ENCODE measurements at regions of chrX and their contacts with region 1.

Region 1: DNA sequence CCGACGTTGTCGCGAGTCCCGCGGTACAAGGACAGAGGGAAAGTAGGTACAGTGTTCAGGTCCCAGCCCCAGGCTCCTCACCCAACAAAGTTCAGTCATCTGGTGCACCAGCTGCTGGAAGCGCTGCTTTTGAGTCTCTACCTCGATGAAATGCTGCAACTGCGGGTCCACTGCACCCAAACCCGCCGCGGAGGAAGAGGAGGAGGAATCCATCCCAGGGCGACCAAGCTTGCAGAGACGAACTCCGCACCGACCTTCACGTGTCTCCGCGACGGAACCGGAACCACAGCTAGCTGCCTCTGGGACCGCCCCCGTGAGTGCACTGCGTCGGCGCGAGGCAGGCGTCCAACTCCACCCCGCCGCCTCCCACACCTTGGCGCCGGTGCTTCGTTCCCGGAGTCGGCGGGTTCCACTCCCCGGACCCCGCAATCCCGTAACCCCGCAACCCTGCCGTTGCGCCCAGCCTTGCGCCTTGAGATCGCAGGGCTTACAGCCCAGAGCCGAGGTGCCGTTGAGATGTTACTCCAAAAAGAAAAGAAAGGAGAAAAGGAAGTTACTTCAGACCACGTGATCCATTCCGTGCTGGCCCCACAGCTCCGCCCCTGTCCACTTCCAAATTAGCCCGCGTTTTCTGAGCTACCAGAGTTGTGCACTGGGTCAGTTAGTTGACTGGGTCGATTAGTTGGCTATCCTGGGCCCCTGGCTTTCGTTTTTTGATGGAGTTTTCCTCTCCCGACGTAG is at the start of gene TIMM8A:
- DNase-seq: peak; percentile 21 to 85
- H3K4me3 ChIP-seq: peak within 1 kb of the TSS; percentile 72 to 78
- H3K27ac ChIP-seq: peak within 1 kb of the TSS; percentile 79 to 81
- H3K4me1 ChIP-seq: peaks cover 0 to 2% of the 10 kb centered on the region in 2 donors
- H3K27me3 ChIP-seq: no peaks in the 10 kb centered on the region
- CTCF ChIP-seq: no peak
- total RNA-seq, gene TIMM8A: not detected

Region 2: GRCh38 chrX:101097546-101098453 is 250.8 kb before region 1 on chrX and contains the start of gene CENPI:
- intact Hi-C with region 1: loop called (anchors 5 kb)
- DNase-seq: peak; percentile 83 to 95
- H3K4me3 ChIP-seq: peak within 1 kb of the TSS; percentile 46 to 55
- H3K27ac ChIP-seq: peak within 1 kb of the TSS; percentile 68 to 77
- H3K4me1 ChIP-seq: no peaks in the 10 kb centered on the region
- H3K27me3 ChIP-seq: no peaks in the 10 kb centered on the region
- CTCF ChIP-seq: no peak
- total RNA-seq, gene CENPI: not detected

Region 3: DNA sequence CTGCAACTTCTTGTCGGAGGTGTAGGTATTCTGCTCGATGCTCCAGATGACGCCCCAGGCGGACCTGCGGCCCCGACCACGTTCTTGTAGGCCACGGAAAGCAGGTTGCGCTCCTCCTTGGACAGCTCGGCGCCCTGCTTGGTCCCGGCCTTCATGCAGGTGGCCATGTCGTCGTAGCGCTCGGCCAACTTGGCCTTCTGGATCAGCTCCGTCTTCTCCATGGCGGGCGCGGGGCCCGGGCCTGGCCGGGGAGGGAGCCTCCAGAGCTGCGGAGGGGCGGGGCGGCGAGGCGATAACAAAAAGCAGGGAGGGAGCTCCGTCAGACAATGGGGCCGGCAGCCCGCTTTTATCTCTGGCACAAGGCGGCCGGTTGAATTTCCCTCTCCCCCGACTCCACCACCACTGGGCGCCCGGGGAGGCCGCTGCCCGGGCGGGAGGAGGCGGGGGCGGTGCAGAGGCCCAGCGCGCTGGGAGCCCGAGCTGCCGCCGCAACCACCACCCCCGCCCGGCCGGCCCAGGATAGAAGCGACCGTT is 157.3 kb before region 1 on chrX:
- intact Hi-C with region 1: loop called (anchors 10 kb)
- DNase-seq: no peak
- H3K4me3 ChIP-seq: peak overlapping the region; percentile 39 to 60
- H3K27ac ChIP-seq: peak overlapping the region; percentile 58 to 74
- H3K4me1 ChIP-seq: no peaks in the 10 kb centered on the region
- H3K27me3 ChIP-seq: no peaks in the 10 kb centered on the region
- CTCF ChIP-seq: no peak

Region 4: DNA sequence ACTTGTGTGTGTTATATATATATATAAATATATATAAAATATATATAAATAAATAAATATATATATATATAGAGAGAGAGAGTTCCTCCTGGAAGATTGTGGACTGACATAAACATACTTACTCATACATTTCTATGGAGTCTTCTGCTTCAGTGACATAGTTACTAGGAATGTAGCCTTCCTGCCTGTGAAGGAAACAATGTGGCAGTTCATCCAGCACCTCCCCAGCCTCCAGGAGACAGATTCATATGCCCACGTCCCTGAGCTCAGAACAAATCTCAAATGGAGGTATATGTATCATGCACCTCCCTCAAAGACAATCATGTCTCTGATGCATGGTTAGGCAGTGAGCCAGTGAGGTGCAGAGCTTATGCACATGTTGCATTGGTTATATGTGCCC is 11.3 kb after region 1 on chrX:
- intact Hi-C with region 1: no loop called
- DNase-seq: no peak
- H3K4me3 ChIP-seq: no peak overlapping the region
- H3K27ac ChIP-seq: no peak overlapping the region
- H3K4me1 ChIP-seq: no peaks in the 10 kb centered on the region
- H3K27me3 ChIP-seq: no peaks in the 10 kb centered on the region
- CTCF ChIP-seq: no peak

Region 5: GRCh38 chrX:101390664-101391525 is 42.3 kb after region 1 on chrX and contains the start of gene RPL36A:
- intact Hi-C with region 1: loop called (anchors 2 kb)
- DNase-seq: peak; percentile 35 to 90
- H3K4me3 ChIP-seq: peak within 1 kb of the TSS; percentile 50 to 63
- H3K27ac ChIP-seq: peak within 1 kb of the TSS; percentile 61 to 75
- H3K4me1 ChIP-seq: no peaks in the 10 kb centered on the region
- H3K27me3 ChIP-seq: no peaks in the 10 kb centered on the region
- CTCF ChIP-seq: peak; percentile 46 to 63 (median 50)
- total RNA-seq, gene RPL36A: 822 TPM

Region 6: DNA sequence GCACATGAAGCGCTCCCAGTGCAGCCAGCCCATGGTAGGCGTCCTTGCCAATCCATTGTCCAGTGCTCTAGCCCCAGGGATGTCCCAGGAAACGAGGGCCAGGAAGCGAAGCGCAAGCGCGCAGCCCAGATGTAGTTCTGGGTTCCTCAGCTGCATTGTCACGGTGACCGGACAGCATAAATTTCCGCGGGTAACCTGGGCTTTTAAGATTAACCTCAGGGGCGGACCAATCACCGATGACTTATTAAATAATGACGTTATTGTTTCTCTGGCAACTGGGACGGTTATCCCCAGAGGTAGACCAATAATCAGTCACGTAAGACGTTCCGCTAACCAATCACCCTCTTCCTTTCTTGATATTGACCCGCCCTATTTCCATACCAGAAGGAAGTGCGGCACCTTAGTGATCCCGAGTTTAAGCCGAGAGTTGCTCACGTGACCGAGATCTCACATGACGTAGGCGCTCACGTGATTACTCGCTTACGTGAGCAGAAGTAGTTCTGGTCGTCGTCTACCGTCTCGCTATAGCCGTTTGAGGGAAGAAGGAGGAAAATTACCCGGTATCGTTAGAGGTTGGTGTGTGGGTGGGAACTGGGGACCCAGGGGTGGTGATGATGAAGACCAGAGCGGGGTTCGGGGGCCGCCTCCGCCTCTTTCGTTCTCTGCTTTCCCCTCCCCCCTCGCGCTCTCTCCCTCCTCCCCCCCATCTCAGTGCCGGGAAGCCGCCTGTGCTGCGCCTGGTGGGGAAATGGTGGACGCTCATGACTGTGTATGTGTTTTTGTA is 59.3 kb after region 1 on chrX and contains the starts of genes GLA and HNRNPH2:
- intact Hi-C with region 1: loop called (anchors 5 kb)
- DNase-seq: peak; percentile 84 to 96
- H3K4me3 ChIP-seq: peak within 1 kb of the TSS; percentile 68 to 81
- H3K27ac ChIP-seq: peak within 1 kb of the TSS; percentile 92 to 93
- H3K4me1 ChIP-seq: peaks cover 0 to 3% of the 10 kb centered on the region in 2 donors
- H3K27me3 ChIP-seq: no peaks in the 10 kb centered on the region
- CTCF ChIP-seq: no peak
- total RNA-seq, gene GLA: 9.0 TPM
- total RNA-seq, gene HNRNPH2: 21.4 TPM

Measured in ascending aorta (tissue), 2 donors.